Right ventricle myocardium superior (tissue), 1 donor: ENCODE measurements at regions of chr3 and their contacts with region 1.

Region 1: GRCh38 chr3:160003520-160004128 is 15.0 kb downstream of the IL12A start:
- DNase-seq: peak; percentile 74
- ATAC-seq: peak; percentile 90

Region 2: DNA sequence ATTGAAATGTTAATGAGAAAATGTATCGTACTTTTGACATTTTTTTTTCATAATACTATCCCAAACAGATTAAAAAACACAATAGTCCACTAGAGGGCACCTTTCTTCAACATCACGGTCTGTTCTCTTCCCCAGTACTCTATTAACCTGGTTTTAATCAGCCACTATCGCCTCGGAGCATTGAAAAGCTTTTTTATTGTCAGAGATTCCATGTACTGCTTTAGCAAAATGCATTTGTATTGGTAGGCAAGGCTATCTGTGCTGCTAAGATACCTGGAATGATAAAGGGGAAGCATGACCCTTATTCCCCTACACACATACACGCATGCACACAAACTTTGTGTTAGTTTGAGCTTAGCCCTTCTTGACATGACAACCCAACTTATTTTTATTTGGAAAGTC is 175.1 kb before region 1 on chr3:
- intact Hi-C with region 1: loop called (anchors 5 kb)
- DNase-seq: no peak
- ATAC-seq: peak; percentile 77

Region 3: DNA sequence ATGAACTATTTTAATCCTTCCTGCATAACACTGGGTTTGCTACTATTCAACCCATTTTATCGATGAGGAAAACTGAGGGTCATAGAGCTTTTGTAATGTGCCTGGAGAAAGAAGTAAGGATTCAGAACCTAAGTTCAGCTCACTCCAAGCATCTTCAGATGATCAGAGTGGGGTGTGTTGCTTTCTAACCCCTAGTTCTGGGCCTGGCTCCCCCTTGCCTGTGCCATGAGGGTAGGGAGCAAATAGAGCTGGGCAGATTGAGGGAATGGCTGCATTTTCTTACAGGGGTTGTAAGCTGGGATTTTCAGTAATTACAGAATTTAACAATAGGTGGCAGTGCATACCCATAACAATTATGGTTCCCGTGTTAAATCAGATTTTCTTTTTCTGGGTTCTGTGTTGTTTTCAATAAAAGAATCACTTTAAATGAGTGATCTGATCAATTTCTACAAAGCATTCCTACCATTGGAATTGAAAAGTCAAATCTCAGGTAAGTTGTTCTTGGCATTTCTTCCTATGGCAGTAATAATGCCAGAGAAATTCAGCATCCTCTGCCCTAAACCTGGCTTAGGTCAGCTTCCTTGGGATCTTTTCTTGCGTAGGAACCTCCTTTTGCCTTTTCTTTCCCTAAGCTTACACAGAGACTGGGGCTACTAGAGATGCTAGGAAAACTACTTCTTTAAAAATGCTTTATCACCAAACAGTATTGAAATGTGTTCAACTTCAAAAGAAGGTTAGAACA is 118.8 kb before region 1 on chr3:
- intact Hi-C with region 1: loop called (anchors 5 kb)
- DNase-seq: no peak
- ATAC-seq: peak; percentile 27